OCI-LY7 (cell line): ENCODE measurements at regions of chr6 and their contacts with region 1.

Region 1: DNA sequence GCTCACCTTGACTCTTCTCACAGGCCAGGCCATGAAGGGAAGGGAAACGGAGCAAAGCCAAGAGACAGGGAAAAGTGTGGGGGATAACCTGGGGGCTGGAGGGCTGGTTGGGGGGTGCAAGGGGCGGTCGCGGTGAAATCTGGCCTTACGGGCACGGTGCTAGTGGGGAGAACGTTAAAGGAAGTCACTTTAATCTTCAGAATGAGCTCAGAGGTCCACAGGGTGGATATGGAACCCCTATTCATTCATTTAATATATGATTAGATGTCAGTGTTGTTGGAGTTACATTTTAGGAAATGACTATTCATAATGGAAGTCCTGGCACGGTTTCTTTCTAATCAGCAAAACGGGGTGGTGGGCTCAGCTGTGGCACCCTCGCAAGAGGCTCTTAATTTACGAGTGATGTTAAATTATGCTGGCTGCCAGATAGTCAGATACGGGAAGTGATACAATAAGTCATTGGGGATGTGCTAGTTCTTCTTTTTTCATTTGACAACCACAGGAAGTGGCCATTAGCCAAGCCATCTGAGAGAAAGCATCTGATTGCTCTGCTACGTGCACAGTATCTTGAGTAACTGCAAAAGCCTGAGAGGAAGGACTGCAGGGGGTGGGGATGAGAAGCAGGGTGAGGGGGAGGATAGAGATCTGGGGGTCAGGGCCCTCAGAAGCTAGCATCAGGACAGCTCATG is 253.0 kb downstream of the QKI start:
- DNase-seq: peak; percentile 94
- H3K4me3 ChIP-seq: peak overlapping the region; percentile 43
- H3K27ac ChIP-seq: peak overlapping the region; percentile 75
- H3K4me1 ChIP-seq: peaks cover 26% of the 10 kb centered on the region
- CTCF ChIP-seq: no peak

Region 2: DNA sequence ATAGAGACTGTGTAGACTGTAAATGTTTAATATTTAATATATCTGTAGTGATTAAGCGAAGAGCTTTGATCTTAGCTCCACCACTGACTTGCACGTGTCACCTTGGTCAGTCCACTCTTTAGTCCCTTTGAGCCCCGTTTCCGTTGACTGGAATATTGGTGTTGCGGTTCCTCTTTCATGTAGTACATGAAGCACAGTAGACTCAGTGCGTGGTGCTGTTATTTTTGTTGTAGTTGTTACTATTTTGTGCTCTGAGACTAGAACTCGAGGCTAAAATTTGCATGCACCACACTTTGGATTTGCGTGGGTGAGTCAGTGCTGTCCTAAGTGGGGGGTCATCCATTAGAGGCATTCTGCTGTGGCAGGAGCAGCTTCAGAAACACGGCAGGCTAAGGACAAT is 38.4 kb after region 1 on chr6:
- CTCF ChIA-PET with region 1: no interaction called
- POLR2A ChIA-PET with region 1: interaction called, 5 read pairs
- intact Hi-C with region 1: loop called (anchors 1 kb)
- DNase-seq: peak; percentile 83
- H3K4me3 ChIP-seq: peak overlapping the region; percentile 23
- H3K27ac ChIP-seq: peak overlapping the region; percentile 73
- H3K4me1 ChIP-seq: peaks cover 90% of the 10 kb centered on the region
- CTCF ChIP-seq: no peak

Region 3: GRCh38 chr6:163814494-163815364 is 147.2 kb after region 1 on chr6:
- CTCF ChIA-PET with region 1: no interaction called
- POLR2A ChIA-PET with region 1: no interaction called
- intact Hi-C with region 1: no loop called
- DNase-seq: peak; percentile 67
- H3K4me3 ChIP-seq: no peak overlapping the region
- H3K27ac ChIP-seq: no peak overlapping the region
- H3K4me1 ChIP-seq: peaks cover 19% of the 10 kb centered on the region
- CTCF ChIP-seq: no peak

Region 4: DNA sequence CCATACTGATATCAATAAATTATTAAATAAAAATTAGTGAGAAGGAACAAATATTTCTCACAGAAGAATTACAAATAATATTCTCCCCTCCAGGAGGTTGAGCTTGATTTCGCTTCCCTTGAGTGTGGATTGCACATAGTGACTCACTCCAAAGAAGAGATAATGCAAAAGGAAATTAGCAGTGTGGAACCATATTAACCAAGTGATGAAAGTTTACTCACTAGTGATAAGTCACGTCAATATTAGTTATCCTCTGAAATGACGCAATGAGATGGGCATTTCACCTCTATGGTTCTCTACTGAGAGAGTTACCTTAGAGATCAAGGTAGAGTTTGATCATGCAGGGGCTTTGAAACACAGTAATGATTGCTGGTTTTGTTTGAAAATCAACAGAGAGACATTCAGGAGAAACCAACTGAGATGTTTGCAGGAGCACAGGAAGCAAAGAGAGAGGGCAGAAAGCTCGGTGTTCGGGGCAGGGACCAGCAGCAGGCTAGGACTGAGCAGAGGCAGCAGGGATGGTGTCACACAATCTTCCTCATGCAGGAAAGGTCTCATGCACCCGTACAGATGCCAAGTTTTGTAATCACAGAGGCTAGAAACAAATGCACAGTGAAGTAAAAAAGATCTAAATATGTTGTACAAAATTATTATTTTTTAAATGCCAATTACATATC is 381.5 kb after region 1 on chr6:
- CTCF ChIA-PET with region 1: no interaction called
- POLR2A ChIA-PET with region 1: no interaction called
- intact Hi-C with region 1: no loop called
- DNase-seq: no peak
- H3K4me3 ChIP-seq: no peak overlapping the region
- H3K27ac ChIP-seq: no peak overlapping the region
- H3K4me1 ChIP-seq: no peaks in the 10 kb centered on the region
- CTCF ChIP-seq: no peak